A549 (cell line): ENCODE measurements at regions of chr5 and their contacts with region 1.

Region 1: DNA sequence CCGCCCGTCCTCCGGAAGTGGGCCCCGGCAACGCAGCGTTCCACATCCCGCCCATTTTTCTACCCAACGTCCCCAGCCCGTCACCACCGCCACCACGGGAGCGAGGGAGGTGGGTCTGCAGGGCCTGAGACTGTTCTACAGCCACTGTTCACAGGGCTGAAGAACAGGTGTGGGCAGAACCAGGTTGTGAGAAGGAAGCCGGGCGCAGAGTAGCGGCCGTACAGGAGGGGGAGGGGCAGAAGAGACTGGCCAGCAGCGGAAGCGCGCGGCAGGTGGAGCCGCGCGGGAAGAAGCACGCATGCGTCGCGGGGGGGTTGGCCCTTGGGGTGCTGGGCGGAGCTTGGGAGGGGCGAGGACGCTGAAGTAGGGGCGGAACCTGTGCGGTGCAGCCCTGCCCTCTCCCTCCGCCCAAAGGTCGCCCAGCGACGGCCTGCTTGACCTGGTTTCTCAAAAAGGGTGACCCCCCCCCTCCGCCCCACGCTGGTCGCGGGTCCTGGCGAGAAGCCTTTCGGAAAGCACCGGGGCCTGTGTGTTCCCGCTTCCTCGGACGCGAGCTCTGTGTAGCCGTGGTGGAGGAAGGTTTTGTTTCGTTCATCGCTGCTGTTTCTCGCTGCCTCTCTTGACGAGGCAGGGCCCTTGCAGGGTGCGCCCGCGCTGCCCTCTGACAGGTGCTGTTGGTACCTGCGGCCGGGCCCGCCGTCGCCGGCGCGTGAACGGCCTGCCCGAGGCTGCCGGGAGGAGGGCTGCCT is 7.8 kb upstream of the MGAT1 start:
- DNase-seq: peak; percentile 87 to 97
- ATAC-seq: peak; percentile 90 to 92
- H3K4me3 ChIP-seq: peak overlapping the region; percentile 76
- H3K27ac ChIP-seq: peak overlapping the region; percentile 99 to 100
- H3K4me1 ChIP-seq: peaks cover 30% of the 10 kb centered on the region
- CTCF ChIP-seq: no peak
- EP300 ChIP-seq: no peak
- POLR2A ChIP-seq: no peak; the same call in none of the 2 replicates
- RAD21 ChIP-seq: no peak

Region 2: DNA sequence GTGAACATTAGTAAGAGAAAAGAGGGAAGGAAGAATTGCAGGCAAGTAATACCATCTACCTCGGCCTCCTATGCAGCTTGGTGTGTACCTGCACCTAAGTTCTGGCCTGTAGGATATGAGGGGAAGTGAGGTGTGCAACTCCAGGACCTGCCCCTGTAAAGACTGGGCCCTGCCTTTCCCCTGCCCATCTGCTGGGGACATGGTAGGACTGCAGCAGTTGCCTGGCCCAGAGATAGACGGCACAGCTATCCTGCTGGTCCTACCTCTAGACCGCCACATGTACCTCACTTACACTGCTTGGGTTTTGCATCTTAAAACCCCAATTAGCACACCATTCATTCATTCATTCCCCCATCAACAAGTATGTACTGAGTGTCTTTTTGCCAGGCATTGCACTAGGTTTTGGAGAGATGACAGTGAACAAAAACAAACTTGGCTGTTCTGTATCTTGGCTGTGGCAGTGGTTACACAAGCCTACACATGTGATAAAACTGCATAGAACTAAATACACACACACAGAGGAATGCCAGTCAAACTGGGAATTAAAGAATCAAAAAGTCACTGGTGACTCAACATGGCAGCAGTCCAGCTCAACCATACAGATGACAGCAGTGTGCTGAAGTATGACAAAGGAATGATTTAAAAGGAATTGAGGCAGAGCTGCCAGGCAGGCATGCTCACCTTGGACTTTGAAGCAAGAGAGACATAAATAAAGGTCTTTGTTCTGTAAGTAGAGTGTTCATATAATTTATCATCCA is 15.6 kb after region 1 on chr5:
- CTCF ChIA-PET with region 1: interaction called, 10 read pairs
- POLR2A ChIA-PET with region 1: interaction called, 43 read pairs
- DNase-seq: no peak
- ATAC-seq: peak; percentile 51 to 54; a peak in 4 of 6 replicates
- H3K4me3 ChIP-seq: no peak overlapping the region
- H3K27ac ChIP-seq: no peak overlapping the region
- H3K4me1 ChIP-seq: peaks cover 25% of the 10 kb centered on the region
- CTCF ChIP-seq: no peak
- EP300 ChIP-seq: no peak
- POLR2A ChIP-seq: no peak
- RAD21 ChIP-seq: no peak

Region 3: GRCh38 chr5:180831139-180832048 is 21.0 kb after region 1 on chr5:
- CTCF ChIA-PET with region 1: interaction called, 10 read pairs
- POLR2A ChIA-PET with region 1: interaction called, 43 read pairs
- DNase-seq: peak; percentile 75 to 90
- ATAC-seq: peak; percentile 97
- H3K4me3 ChIP-seq: peak overlapping the region; percentile 66
- H3K27ac ChIP-seq: peak overlapping the region; percentile 93 to 99
- H3K4me1 ChIP-seq: peaks cover 22% of the 10 kb centered on the region
- CTCF ChIP-seq: no peak
- EP300 ChIP-seq: no peak
- POLR2A ChIP-seq: peak; percentile 70
- RAD21 ChIP-seq: no peak

Region 4: GRCh38 chr5:180860887-180861822 is 50.8 kb after region 1 on chr5 and contains the start of gene ZFP62:
- CTCF ChIA-PET with region 1: no interaction called
- POLR2A ChIA-PET with region 1: interaction called, 12 read pairs
- DNase-seq: peak; percentile 77 to 94
- ATAC-seq: peak; percentile 94 to 98
- H3K4me3 ChIP-seq: peak within 1 kb of the TSS; percentile 95
- H3K27ac ChIP-seq: peak within 1 kb of the TSS; percentile 97 to 98
- H3K4me1 ChIP-seq: peaks cover 19% of the 10 kb centered on the region
- CTCF ChIP-seq: no peak; the same call in 2 of the 3 replicates
- EP300 ChIP-seq: no peak
- POLR2A ChIP-seq: peak; percentile 21; the same call in 1 of the 2 replicates
- RAD21 ChIP-seq: no peak
- polyA plus RNA-seq, gene ZFP62: 19.2 and 23.4 TPM in 2 replicates

Region 5: GRCh38 chr5:181020688-181021087 is 210.3 kb after region 1 on chr5:
- CTCF ChIA-PET with region 1: no interaction called
- POLR2A ChIA-PET with region 1: no interaction called
- DNase-seq: no peak
- ATAC-seq: no peak
- H3K4me3 ChIP-seq: no peak overlapping the region
- H3K27ac ChIP-seq: no peak overlapping the region
- H3K4me1 ChIP-seq: no peaks in the 10 kb centered on the region
- CTCF ChIP-seq: no peak
- EP300 ChIP-seq: no peak
- POLR2A ChIP-seq: no peak
- RAD21 ChIP-seq: no peak